H1 (cell line): ENCODE measurements at regions of chr1 and their contacts with region 1.

Region 1: DNA sequence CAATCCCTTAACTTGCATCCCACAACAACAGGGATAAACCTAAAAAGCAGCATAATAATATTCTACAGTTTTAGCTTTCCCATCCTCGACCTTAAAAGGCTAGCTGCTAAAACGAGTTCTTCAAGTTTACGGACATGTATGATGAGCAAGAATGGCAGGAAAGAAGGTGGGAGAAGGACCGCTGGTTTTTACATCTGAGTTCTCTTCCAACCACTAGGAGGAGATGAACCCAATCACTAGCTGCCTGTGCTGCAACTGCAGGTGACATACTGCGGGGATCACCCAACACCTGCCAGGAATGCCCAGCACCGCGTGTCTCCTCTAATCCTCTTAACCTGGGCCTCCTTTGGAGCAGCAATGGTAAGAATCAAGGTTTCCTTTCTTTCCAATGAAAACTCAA is 23.5 kb downstream of the TOR3A start:
- DNase-seq: peak in 1 of 2 experiments; percentile 50
- H3K4me3 ChIP-seq: no peak overlapping the region
- H3K27ac ChIP-seq: no peak overlapping the region
- H3K4me1 ChIP-seq: no peaks in the 10 kb centered on the region
- H3K27me3 ChIP-seq: no peaks in the 10 kb centered on the region
- CTCF ChIP-seq: peak; percentile 55 to 90 (median 84)
- EP300 ChIP-seq: no peak
- POLR2A ChIP-seq: no peak
- RAD21 ChIP-seq: peak; percentile 75 to 78

Region 2: GRCh38 chr1:179091691-179092165 is 13.6 kb before region 1 on chr1:
- CTCF ChIA-PET with region 1: interaction called, 41 read pairs
- POLR2A ChIA-PET with region 1: interaction called, 6 read pairs
- DNase-seq: no peak
- H3K4me3 ChIP-seq: no peak overlapping the region
- H3K27ac ChIP-seq: no peak overlapping the region; the same call in 1 of the 2 replicates
- H3K4me1 ChIP-seq: peaks cover 0 to 19% (median 12%) of the 10 kb centered on the region in 4 experiments; a peak in 6 of 7 replicates
- H3K27me3 ChIP-seq: no peaks in the 10 kb centered on the region
- CTCF ChIP-seq: no peak
- EP300 ChIP-seq: no peak
- POLR2A ChIP-seq: no peak
- RAD21 ChIP-seq: no peak